ENCODE measurements at regions of chr12 and their contacts with region 1.

Region 1: GRCh38 chr12:46268590-46269558 is at the start of gene SLC38A1:
- DNase-seq: peak; percentile 78 to 88 (median 80)
- ATAC-seq: peak; percentile 87
- H3K4me3 ChIP-seq: peak within 1 kb of the TSS; percentile 83
- H3K27ac ChIP-seq: peak within 1 kb of the TSS; percentile 96
- H3K4me1 ChIP-seq: peaks cover 19 to 33% of the 10 kb centered on the region in 2 experiments; a peak in 4 of 5 replicates
- H3K27me3 ChIP-seq: no peaks in the 10 kb centered on the region
- CTCF ChIP-seq: 0 out of 6 replicates have a peak, but pooled peaks of 2 of the 3 experiments have one; percentile 12 to 14
- EP300 ChIP-seq: peak; percentile 56
- POLR2A ChIP-seq: peak; percentile 88
- RAD21 ChIP-seq: peak in 1 of 2 experiments; percentile 29
- polyA plus RNA-seq, gene SLC38A1: 51.9 to 75.0 TPM

Region 2: DNA sequence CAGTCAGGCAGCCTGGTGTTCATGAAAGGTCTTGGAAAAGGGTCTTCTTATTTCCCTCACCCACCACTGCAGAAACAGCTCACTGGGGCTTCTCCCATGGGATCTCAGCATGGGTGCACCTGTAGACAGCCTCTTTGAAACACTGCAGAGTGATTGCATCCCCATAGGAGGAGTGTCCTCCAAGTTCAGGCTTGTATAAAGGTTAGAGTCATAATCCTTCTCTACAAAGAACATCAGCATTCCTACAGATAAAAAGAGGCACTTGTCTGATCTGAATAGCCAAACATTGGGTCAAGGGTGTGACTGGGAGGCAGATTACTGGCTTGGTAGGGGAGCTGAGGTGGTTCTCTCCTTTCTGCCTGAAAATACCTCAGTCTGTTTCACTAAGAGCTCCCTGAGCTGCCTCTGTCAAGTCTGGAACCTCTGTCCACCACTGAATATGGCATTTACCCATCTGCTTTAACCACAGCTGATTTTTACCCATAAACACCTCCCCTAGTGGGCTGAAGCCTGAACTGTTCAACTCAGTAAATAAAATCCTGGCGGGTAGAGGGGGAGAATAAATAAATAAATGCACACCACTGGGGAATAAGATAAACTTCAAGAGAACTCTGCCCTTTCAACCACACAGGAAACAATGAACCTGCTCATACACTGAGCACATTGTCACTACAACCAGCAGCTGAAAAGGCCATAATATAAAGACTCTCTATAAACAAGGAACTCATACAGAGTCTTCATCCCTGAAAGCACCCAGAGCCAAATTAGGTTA is 157.8 kb before region 1 on chr12:
- CTCF ChIA-PET with region 1: no interaction called
- POLR2A ChIA-PET with region 1: no interaction called
- in situ Hi-C with region 1: no loop called
- intact Hi-C with region 1: no loop called
- DNase-seq: no peak
- ATAC-seq: no peak
- H3K4me3 ChIP-seq: no peak overlapping the region
- H3K27ac ChIP-seq: no peak overlapping the region
- H3K4me1 ChIP-seq: no peaks in the 10 kb centered on the region
- H3K27me3 ChIP-seq: no peaks in the 10 kb centered on the region
- CTCF ChIP-seq: no peak
- EP300 ChIP-seq: no peak
- POLR2A ChIP-seq: no peak
- RAD21 ChIP-seq: no peak

Region 3: DNA sequence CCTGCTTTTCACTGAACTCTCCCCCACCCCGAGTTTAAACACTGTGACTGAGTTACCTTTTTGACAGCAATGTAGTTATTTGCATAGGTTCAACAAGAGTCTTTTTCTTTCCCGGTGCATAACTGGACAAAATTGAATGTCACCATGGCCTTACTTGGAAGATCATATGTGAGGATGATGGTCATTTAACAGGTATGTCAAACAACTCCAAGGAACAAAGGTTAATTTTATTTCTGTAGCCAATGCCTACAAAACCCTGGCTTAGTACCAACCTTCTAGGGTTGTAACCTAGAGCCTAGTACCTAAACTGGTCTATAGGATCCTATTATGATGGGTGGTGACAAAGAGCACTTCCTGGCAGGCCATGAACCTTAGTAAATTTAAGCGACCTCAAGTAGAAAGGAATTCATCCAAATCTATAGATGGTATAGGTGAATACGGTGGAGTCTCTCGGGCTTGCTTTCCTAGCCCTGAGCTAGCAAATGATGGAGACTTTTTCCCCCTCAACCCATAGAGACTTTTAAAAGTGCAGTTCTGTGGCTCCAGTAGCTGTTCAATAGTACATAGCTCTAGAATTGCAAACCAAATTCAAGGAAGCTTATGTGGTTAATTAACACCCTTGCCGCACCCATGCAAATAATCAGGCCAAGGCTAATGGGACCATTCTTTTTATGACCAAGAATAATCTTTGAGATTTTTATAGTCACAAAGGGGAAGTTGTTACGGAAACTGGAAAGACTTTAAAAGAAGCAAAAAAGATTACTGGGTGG is 89.0 kb before region 1 on chr12:
- CTCF ChIA-PET with region 1: no interaction called
- POLR2A ChIA-PET with region 1: interaction called, 3 read pairs
- in situ Hi-C with region 1: no loop called
- intact Hi-C with region 1: loop called (anchors 5 kb)
- DNase-seq: no peak
- ATAC-seq: no peak
- H3K4me3 ChIP-seq: no peak overlapping the region
- H3K27ac ChIP-seq: no peak overlapping the region
- H3K4me1 ChIP-seq: no peaks in the 10 kb centered on the region
- H3K27me3 ChIP-seq: peaks cover 2 to 3% of the 10 kb centered on the region in 2 experiments; a peak in 3 of 5 replicates
- CTCF ChIP-seq: no peak
- EP300 ChIP-seq: no peak
- POLR2A ChIP-seq: no peak
- RAD21 ChIP-seq: no peak

Region 4: GRCh38 chr12:46556105-46556559 is 287.3 kb after region 1 on chr12:
- CTCF ChIA-PET with region 1: no interaction called
- POLR2A ChIA-PET with region 1: no interaction called
- in situ Hi-C with region 1: no loop called
- intact Hi-C with region 1: loop called (anchors 10 kb)
- DNase-seq: no peak
- ATAC-seq: no peak
- H3K4me3 ChIP-seq: no peak overlapping the region
- H3K27ac ChIP-seq: no peak overlapping the region
- H3K4me1 ChIP-seq: peaks cover 3 to 34% of the 10 kb centered on the region in 2 experiments; a peak in 4 of 5 replicates
- H3K27me3 ChIP-seq: no peaks in the 10 kb centered on the region
- CTCF ChIP-seq: no peak
- EP300 ChIP-seq: no peak
- POLR2A ChIP-seq: no peak
- RAD21 ChIP-seq: no peak